HEK293 (cell line): ENCODE measurements at regions of chr19 and their contacts with region 1.

Region 1: GRCh38 chr19:12766051-12766521 is 9.3 kb downstream of the HOOK2 start:
- H3K4me3 ChIP-seq: peak overlapping the region; percentile 44
- H3K27ac ChIP-seq: no peak overlapping the region
- H3K4me1 ChIP-seq: no peaks in the 10 kb centered on the region
- CTCF ChIP-seq: peak; percentile 94

Region 2: DNA sequence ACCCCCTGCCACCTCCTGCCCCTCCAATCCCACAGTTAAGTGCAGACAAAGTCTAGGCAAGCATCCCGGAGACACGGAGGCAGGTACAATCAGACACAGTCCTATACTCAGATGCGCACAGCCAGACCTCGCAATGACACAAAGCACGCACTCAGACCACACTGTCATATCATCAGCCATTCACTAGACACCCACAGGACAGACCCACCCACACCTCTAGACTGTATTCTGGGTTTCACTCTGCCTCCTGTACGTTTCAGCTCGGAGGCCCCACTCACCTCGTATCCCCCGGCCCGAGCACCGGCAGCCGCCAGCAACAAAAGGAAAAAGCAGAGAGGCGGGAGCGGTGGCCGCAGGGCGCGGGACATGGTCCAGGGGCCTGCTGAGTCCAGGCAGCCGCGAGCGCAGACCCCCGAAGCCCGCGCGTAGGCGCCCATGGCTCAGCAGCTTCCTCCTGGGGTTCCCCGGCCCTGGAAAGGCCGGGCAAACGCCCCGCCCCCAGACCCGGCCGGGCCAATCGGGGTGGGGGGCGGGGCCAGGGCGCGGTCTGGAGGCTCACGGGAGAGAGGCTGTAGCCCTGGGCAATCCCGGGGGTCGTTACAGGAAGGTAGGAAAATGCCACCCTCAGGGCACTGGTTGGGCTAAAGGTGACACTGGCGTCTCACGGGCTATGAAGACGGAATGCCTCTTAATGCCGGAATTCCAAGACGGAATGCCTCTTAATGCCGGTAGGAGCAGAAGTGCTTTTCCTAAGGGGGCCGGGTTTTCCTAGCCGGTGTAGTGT is 99.6 kb before region 1 on chr19 and contains the starts of genes MAN2B1 and WDR83:
- CTCF ChIA-PET with region 1: no interaction called
- POLR2A ChIA-PET with region 1: no interaction called
- H3K4me3 ChIP-seq: peak within 1 kb of the TSS; percentile 76
- H3K27ac ChIP-seq: peak within 1 kb of the TSS; percentile 45; the same call in 1 of the 2 replicates
- H3K4me1 ChIP-seq: no peaks in the 10 kb centered on the region
- CTCF ChIP-seq: no peak

Region 3: DNA sequence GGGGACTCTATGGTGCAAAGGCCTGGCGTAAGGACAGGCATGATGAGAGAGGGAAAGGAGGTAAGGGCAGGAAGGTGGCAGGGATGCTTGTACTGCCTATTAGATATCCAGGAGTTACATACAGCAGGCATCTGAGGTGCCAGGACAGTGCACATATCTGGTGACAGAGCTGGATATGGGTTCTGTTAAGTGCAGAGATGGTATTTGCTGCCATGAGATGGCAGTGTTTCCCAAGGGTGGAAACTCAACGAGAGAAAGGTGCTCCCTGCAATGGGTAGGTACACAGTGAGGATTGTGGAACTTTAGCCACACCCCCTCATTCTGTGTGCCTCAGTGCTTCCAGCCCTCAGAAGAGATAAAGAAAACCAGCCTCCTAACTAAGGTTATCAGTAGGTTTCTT is 49.2 kb before region 1 on chr19:
- CTCF ChIA-PET with region 1: interaction called, 15 read pairs
- POLR2A ChIA-PET with region 1: interaction called, 7 read pairs
- H3K4me3 ChIP-seq: no peak overlapping the region
- H3K27ac ChIP-seq: no peak overlapping the region
- H3K4me1 ChIP-seq: no peaks in the 10 kb centered on the region
- CTCF ChIP-seq: peak; percentile 72

Region 4: GRCh38 chr19:12736995-12737834 is 28.9 kb before region 1 on chr19 and contains the start of gene GET3:
- CTCF ChIA-PET with region 1: interaction called, 14 read pairs
- POLR2A ChIA-PET with region 1: interaction called, 4 read pairs
- H3K4me3 ChIP-seq: peak within 1 kb of the TSS; percentile 96
- H3K27ac ChIP-seq: peak within 1 kb of the TSS; percentile 84
- H3K4me1 ChIP-seq: 0 out of 2 replicates have a peak, but pooled peaks cover 4% of the 10 kb centered on the region
- CTCF ChIP-seq: no peak; the same call in 1 of the 2 replicates

Region 5: DNA sequence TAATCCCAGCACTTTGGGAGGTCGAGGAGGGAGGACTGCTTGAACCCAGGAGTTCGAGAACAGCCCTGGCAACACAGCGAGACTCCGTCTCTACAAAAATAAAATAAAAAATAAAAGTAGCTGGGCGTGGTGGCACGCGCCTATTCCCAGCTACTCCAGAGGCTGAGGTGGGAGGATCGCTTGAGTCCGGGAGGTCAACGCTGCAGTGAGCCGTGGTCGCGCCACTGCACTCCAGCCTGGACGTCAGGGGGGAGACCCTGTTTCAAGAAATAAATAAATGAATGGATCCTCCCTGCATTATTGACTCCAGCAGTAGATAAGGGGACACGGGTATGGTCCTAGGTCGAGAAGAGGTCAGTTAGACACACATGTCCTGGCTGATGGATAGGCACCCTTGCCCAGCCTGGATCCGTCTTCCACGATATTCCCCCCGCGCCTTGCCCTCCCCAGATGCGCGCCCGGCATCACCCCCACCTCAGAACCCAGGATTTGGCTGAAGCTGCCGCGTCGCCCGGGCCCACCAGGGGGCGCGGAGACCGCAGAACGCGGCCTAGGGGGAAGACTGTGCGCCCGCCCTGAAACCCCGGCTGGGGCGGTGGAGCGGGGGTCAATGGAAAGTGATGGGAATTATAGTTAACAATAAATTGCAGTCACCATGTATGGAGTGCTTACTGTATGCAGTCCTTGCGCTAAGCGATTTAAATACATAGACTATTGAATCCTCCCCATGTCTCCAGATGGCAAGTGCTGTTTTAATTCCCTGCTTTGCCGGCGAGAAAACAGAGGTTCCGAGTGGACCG is 11.3 kb after region 1 on chr19:
- CTCF ChIA-PET with region 1: interaction called, 35 read pairs
- POLR2A ChIA-PET with region 1: interaction called, 3 read pairs
- H3K4me3 ChIP-seq: peak overlapping the region; percentile 39
- H3K27ac ChIP-seq: no peak overlapping the region
- H3K4me1 ChIP-seq: peaks cover 4% of the 10 kb centered on the region; the same call in 1 of the 2 replicates
- CTCF ChIP-seq: peak; percentile 81

Region 6: GRCh38 chr19:12789904-12790619 is 24.0 kb after region 1 on chr19:
- CTCF ChIA-PET with region 1: interaction called, 386 read pairs
- POLR2A ChIA-PET with region 1: interaction called, 28 read pairs
- H3K4me3 ChIP-seq: peak overlapping the region; percentile 30
- H3K27ac ChIP-seq: no peak overlapping the region; the same call in 1 of the 2 replicates
- H3K4me1 ChIP-seq: peaks cover 21% of the 10 kb centered on the region
- CTCF ChIP-seq: no peak; the same call in 1 of the 2 replicates

Region 7: DNA sequence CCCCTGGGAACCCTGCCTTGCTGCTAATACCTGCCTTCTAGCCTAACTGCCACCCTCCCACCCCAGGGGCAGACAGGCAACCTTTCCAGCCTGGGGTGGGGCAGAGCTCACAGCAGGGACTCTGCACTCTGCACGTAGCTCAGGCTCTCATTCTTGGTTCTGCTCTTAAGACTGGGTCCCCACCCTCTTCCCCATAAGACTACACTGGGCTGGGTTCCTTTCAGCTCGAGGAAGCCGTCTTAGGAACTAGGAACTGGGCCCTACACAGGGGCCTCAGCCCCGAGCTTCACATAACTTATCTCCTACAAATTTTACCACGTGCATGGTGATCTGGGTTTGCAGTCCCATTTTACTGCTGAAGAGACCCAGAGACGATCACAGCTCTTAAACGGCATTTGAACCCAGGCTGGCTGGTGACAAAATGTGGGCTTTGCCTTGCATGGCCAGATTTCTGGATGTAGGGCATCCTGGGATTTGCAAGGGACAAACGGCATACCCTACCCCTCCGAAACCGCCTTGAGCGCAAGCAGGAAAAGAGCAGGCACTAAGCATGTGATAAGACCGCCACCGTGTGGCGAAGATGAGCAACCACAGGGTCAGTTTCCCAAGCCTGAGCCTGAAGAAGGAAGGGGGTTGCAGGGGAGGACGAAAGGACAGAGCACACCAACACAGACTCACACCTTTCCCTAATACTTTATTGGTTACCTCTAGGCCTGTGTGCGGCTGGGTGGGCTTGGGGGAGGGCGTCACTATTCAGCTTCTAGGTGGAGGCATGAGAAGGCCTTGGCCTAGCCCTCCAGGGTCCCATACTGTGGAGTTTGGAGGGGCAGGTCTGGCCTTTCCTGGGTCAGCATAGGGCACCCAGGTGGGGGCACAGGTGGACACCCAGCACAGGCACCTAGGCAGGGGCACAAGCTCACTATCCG is 30.3 kb after region 1 on chr19:
- CTCF ChIA-PET with region 1: interaction called, 386 read pairs
- POLR2A ChIA-PET with region 1: interaction called, 28 read pairs
- H3K4me3 ChIP-seq: no peak overlapping the region
- H3K27ac ChIP-seq: no peak overlapping the region
- H3K4me1 ChIP-seq: peaks cover 4% of the 10 kb centered on the region
- CTCF ChIP-seq: peak; percentile 97